H1 (cell line): ENCODE measurements at regions of chr13 and their contacts with region 1.

Region 1: GRCh38 chr13:108895220-108895704 is 265.9 kb downstream of the MYO16 start:
- DNase-seq: no peak
- H3K4me3 ChIP-seq: no peak overlapping the region
- H3K27ac ChIP-seq: no peak overlapping the region
- H3K4me1 ChIP-seq: no peaks in the 10 kb centered on the region
- H3K27me3 ChIP-seq: no peaks in the 10 kb centered on the region
- CTCF ChIP-seq: peak in 2 of 3 experiments; percentile 12 to 29; a peak in 2 of 4 replicates
- EP300 ChIP-seq: no peak
- POLR2A ChIP-seq: no peak
- RAD21 ChIP-seq: peak; percentile 47 to 54

Region 2: GRCh38 chr13:108609353-108609752 is 285.9 kb before region 1 on chr13:
- CTCF ChIA-PET with region 1: interaction called, 28 read pairs
- POLR2A ChIA-PET with region 1: no interaction called
- DNase-seq: no peak
- H3K4me3 ChIP-seq: no peak overlapping the region
- H3K27ac ChIP-seq: no peak overlapping the region
- H3K4me1 ChIP-seq: no peaks in the 10 kb centered on the region
- H3K27me3 ChIP-seq: no peaks in the 10 kb centered on the region
- CTCF ChIP-seq: peak in 2 of 3 experiments; percentile 43 to 51; a peak in 2 of 4 replicates
- EP300 ChIP-seq: no peak
- POLR2A ChIP-seq: no peak
- RAD21 ChIP-seq: peak; percentile 60 to 65

Region 3: DNA sequence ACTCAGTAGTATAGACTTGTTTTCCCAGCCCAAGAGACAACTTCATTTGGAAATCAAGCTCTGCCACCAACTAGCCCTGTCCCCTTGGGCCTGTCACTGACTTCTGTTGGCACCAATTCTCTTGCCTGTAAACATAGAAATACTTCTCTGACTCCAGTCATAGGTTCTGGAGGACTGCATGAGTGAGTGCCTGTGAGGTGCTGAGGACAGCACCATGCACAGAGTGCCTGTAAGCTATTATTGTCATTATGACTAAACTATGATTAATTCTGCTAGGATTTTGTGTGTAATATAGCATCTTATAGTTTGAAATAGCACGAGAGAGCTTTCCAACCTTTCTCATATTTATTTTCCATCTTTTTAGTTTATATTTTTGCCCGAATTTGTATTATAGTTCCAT is 18.0 kb before region 1 on chr13:
- CTCF ChIA-PET with region 1: interaction called, 12 read pairs
- POLR2A ChIA-PET with region 1: no interaction called
- DNase-seq: no peak
- H3K4me3 ChIP-seq: no peak overlapping the region
- H3K27ac ChIP-seq: no peak overlapping the region
- H3K4me1 ChIP-seq: no peaks in the 10 kb centered on the region
- H3K27me3 ChIP-seq: no peaks in the 10 kb centered on the region
- CTCF ChIP-seq: no peak
- EP300 ChIP-seq: no peak
- POLR2A ChIP-seq: no peak
- RAD21 ChIP-seq: no peak

Region 4: DNA sequence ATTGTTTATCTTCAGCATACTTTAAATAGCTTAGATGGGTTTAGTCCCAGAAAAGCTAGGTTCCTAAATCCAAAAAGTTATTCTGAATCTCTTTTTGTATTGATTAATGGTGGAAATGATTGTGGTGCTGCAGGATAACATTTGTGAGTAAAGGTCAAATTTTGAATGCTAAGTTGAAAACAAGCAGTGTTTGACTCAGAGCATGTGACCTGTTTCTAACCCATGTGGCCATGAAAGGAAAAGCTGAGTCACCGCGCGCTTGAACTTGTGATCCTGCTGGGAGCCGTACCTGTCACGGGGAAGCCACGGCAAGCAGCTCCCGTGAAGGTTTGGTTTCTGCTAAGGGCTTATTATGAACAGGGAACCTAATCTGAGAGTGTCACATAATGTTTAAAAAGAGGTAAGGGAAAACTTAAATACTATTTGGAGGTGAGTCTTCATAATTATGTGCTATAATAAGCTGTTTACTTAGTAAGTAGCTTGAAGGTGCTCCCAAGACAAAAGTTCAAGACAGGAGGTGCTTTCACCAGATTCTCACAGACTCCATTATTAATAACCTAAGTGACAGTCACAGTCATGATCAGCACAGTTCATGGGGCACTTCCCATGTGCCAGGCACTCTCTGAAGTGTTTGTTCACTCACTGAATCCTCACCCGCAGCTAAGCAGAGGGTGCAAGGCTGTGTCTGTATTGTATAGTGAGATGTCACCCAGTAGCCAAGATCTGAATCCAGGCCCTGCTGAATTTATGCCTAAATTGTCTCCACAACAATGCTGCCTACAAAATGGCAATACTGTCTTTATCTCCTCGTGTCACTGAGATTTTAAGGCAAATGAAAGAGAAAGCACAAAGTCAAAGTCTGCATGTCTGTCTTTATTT is 20.6 kb after region 1 on chr13:
- CTCF ChIA-PET with region 1: interaction called, 11 read pairs
- POLR2A ChIA-PET with region 1: no interaction called
- DNase-seq: peak in 1 of 2 experiments; percentile 25
- H3K4me3 ChIP-seq: no peak overlapping the region
- H3K27ac ChIP-seq: 0 out of 2 replicates have a peak overlapping the region, but pooled peaks have one; percentile 29
- H3K4me1 ChIP-seq: peaks cover 0 to 2% (median 0%) of the 10 kb centered on the region in 4 experiments; a peak in 1 of 7 replicates
- H3K27me3 ChIP-seq: no peaks in the 10 kb centered on the region
- CTCF ChIP-seq: no peak
- EP300 ChIP-seq: no peak
- POLR2A ChIP-seq: no peak
- RAD21 ChIP-seq: no peak

Region 5: DNA sequence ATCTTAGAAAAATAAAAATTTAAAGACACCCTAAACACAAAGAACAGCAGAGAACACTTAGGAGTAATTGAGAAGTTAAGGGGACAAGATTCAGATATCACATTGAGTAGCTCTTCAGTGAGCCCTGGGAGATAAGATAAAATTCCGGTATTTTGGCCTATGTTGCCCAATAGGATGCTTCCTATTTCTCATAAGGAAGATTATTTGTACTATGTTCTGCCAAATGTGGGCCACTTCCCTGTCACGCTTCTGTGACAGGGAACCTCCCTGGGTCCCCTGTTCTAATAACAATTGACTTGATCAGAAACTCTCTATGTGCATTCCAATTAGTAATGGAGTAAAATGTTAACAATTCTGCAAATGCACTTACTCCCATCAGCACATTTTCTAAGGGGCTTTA is 44.9 kb after region 1 on chr13:
- CTCF ChIA-PET with region 1: no interaction called
- POLR2A ChIA-PET with region 1: no interaction called
- DNase-seq: no peak
- H3K4me3 ChIP-seq: no peak overlapping the region
- H3K27ac ChIP-seq: no peak overlapping the region
- H3K4me1 ChIP-seq: no peaks in the 10 kb centered on the region
- H3K27me3 ChIP-seq: no peaks in the 10 kb centered on the region
- CTCF ChIP-seq: no peak
- EP300 ChIP-seq: no peak
- POLR2A ChIP-seq: no peak
- RAD21 ChIP-seq: no peak

Region 6: GRCh38 chr13:108980237-108980636 is 85.0 kb after region 1 on chr13:
- CTCF ChIA-PET with region 1: no interaction called
- POLR2A ChIA-PET with region 1: no interaction called
- DNase-seq: no peak
- H3K4me3 ChIP-seq: no peak overlapping the region
- H3K27ac ChIP-seq: no peak overlapping the region
- H3K4me1 ChIP-seq: no peaks in the 10 kb centered on the region
- H3K27me3 ChIP-seq: no peaks in the 10 kb centered on the region
- CTCF ChIP-seq: no peak
- EP300 ChIP-seq: no peak
- POLR2A ChIP-seq: no peak
- RAD21 ChIP-seq: no peak